Left cardiac atrium (tissue), 4 donors: ENCODE measurements at regions of chr2 and their contacts with region 1.

Region 1: DNA sequence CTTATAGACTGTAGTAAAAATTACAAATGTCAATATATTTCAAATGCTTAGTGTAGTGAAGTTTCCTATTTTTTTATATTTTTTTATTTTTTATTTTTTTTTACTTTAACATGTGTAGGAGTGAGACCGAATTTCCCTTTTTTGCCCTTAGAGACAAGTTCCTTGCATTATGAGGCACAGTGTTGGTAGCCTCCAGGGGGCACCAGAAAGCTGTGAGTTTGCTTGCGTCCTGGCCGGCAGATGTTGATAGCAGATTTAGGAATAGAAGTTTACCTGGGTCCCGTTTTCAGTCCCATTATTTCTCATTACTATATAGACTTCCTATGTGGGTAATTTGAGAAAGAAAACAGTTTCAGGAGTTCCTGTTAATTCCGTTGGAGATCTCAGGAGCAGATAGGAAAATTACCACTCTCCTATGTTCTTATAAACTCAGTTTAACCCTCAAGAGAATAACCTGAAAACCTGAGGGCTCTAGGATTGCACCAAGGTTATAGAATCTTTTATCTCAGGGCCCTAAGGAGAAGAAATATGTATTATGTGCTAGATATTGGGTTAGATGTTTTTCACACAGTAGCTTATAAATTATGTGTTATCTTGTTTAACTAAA is 157.5 kb upstream of the SESTD1 start:
- DNase-seq: peak; percentile 79
- ATAC-seq: peak; percentile 77

Region 2: GRCh38 chr2:179612108-179612507 is 190.0 kb after region 1 on chr2:
- intact Hi-C with region 1: loop called in 1 of 2 experiments (anchors 10 kb)
- DNase-seq: no peak
- ATAC-seq: no peak

Region 3: DNA sequence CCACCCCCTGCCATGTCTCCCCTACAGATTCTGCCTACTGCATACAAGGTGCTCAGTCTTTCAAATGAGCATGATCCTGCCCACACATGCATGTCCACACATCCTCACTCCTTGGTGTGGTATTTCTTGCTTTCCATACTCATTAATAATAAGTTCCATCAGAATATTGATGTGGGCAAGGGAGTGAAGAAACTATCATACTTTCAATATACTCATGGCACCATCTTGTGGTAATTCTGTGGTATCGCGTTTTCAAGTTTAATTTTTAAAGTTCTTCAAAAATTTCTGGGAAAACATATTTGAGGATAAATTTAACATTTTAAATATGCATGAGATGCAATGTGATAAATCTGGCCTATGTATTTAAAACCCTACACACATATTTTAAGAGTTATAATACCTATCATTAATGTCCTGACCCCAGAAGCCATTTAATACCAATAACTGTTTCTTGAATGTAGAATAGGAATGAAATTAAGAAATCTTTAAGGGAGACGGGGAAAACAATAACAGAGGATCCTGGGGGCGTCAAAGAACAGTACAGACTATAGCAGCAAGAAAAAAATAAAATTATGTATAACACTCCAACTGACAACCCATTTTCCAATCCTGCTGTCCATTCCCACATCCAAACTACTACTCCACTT is 329.1 kb after region 1 on chr2:
- intact Hi-C with region 1: loop called (anchors 2 to 10 kb)
- DNase-seq: no peak
- ATAC-seq: no peak